Tibial artery (tissue), 4 donors: ENCODE measurements at regions of chr4 and their contacts with region 1.

Region 1: GRCh38 chr4:185203486-185204237 is at the start of gene CFAP97:
- DNase-seq: peak; percentile 89 to 96
- H3K4me3 ChIP-seq: peak within 1 kb of the TSS; percentile 61 to 76
- H3K27ac ChIP-seq: peak within 1 kb of the TSS; percentile 94 to 97
- H3K4me1 ChIP-seq: peaks cover 0 to 47% (median 16%) of the 10 kb centered on the region in 4 donors
- H3K27me3 ChIP-seq: no peaks in the 10 kb centered on the region
- CTCF ChIP-seq: no peak

Region 2: GRCh38 chr4:185395956-185396723 is 192.5 kb after region 1 on chr4:
- intact Hi-C with region 1: loop called (anchors 5 kb)
- DNase-seq: peak; percentile 96 to 100
- H3K4me3 ChIP-seq: peak overlapping the region; percentile 82 to 86
- H3K27ac ChIP-seq: peak overlapping the region; percentile 100
- H3K4me1 ChIP-seq: peaks cover 0 to 39% (median 19%) of the 10 kb centered on the region in 4 donors
- H3K27me3 ChIP-seq: no peaks in the 10 kb centered on the region
- CTCF ChIP-seq: no peak

Region 3: DNA sequence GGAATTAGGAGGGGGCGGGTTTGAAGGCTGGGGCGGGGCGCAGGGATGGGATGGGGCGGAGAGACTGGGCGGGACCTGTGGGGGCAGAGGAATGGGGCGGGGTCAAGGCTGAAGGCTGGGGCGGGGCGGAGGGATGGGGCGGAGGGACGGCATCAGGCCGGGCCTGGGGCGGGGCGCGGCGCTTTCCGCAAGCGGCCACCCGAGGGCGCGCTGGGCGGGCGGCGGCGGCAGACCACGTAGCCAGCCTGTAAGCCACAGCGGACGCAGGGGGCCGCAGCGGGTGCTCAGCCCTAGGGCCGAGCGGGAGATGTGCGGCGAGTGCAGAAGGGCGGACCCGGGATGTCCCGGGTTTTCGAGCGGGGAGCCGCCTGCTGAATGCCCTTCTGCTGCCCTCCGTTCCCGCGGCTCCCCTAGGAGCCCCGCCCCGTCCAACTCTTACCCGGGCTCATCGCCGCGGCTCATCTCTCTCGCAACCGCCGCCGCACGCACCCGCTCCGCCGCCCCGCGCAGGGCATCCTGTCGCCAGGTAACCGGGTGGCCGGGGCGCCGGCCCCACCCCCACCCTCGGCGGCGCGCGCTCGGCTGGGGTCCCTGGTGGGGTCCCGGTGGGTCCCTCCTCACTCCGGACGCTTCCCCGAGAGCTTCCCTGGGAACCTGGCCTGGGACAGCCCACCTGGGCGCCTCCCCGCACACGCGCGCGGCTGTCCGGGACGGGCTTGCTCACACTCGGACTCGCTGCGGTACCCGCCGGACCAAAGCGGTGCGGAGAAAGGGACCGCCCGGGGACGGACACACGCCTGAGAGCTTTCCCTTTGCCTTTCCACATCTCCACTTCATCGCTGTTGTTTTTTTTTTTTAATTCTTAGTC is 267.8 kb after region 1 on chr4 and contains the start of gene CCDC110:
- intact Hi-C with region 1: loop called (anchors 10 kb)
- DNase-seq: peak; percentile 92 to 97
- H3K4me3 ChIP-seq: peak within 1 kb of the TSS; percentile 72 to 78
- H3K27ac ChIP-seq: peak within 1 kb of the TSS; percentile 83 to 84
- H3K4me1 ChIP-seq: peaks cover 0 to 31% (median 2%) of the 10 kb centered on the region in 4 donors
- H3K27me3 ChIP-seq: no peaks in the 10 kb centered on the region
- CTCF ChIP-seq: peak; percentile 70 to 82

Region 4: DNA sequence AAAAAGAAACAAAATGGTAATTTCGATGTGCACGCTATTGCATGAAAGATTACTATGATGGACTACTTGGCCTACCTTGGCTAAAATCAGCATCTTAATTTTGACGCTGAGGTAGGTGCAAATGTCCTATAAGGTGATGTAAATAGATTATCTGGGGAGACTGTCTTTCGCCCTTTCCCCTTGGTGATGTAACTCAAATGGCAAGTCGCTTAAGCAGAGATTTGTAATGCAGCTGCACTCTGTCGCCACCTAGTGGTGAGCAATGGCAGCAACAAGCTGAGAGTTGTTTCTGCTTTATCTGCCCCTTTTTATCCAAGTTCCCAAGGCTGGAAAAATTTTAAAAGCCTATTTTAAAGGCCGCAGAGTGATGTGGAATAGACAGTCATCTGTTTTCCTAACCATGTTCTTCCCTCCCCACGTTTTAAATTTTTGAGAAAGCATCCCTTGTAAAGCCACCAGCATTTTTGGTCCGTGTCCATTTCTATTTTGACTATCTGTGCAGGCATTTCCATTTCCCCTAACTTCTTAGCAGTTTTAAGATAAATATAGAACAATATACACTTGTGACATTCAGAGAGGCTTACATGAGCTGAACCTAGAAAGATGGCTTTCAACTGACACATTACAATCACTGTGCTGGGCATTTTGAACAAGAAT is 394.0 kb after region 1 on chr4:
- intact Hi-C with region 1: loop called (anchors 10 kb)
- DNase-seq: peak; percentile 80 to 88
- H3K4me3 ChIP-seq: no peak overlapping the region
- H3K27ac ChIP-seq: peak overlapping the region; percentile 58 to 77
- H3K4me1 ChIP-seq: peaks cover 0 to 54% (median 20%) of the 10 kb centered on the region in 4 donors
- H3K27me3 ChIP-seq: no peaks in the 10 kb centered on the region
- CTCF ChIP-seq: peak; percentile 97 to 100

Region 5: DNA sequence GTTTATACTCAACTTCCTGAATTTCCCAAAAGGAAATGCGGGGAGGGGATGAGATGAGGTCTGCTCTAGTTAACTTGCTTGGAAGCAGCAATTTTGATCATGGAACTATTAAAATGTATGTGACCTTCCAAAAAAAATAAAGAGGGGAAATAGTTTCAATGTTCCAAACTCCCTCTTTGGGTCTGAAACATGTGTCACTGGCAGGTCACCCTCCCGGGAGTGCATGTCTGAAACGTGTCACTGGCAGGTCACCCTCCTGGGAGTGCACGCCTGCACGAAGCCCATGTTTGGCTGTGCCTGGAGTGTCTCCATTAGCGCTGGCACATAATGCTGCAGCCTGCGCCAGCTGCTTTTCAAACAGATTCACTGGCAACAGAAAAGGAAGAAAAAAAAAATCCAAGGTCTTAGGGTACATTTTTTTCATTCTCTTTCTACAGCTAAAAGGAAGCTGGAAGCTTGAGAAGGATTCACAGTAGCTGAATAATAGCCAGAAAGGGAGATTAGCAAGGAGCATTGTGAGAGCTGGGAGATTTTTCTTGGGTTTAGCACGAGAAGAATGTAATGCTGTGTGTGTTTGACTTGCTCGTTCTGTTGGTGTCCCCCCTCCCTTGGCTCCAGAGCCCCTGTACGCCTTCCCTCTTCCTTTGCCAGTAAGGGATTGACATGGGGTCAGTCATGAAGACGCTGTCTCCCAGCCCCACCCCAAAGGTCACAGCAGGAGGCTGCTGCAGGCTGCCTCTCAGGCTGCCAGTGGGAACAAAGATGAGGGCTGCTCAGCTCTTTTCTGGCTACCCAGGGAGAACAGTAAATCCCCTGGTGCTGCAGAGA is 826.1 kb after region 1 on chr4:
- intact Hi-C with region 1: loop called (anchors 5 kb)
- DNase-seq: peak; percentile 86 to 97
- H3K4me3 ChIP-seq: peak overlapping the region; percentile 24 to 26
- H3K27ac ChIP-seq: peak overlapping the region; percentile 73 to 83
- H3K4me1 ChIP-seq: peaks cover 0 to 65% (median 42%) of the 10 kb centered on the region in 4 donors
- H3K27me3 ChIP-seq: no peaks in the 10 kb centered on the region
- CTCF ChIP-seq: no peak